IMR-90 (cell line): ENCODE measurements at regions of chr1 and their contacts with region 1.

Region 1: GRCh38 chr1:232635778-232636356 is 5.9 kb upstream of the SIPA1L2 start:
- DNase-seq: peak; percentile 70
- ATAC-seq: peak; percentile 89
- H3K4me3 ChIP-seq: no peak overlapping the region
- H3K27ac ChIP-seq: no peak overlapping the region
- H3K4me1 ChIP-seq: no peaks in the 10 kb centered on the region
- H3K27me3 ChIP-seq: peaks cover 12% of the 10 kb centered on the region
- CTCF ChIP-seq: peak; percentile 83
- POLR2A ChIP-seq: no peak
- RAD21 ChIP-seq: peak; percentile 76

Region 2: DNA sequence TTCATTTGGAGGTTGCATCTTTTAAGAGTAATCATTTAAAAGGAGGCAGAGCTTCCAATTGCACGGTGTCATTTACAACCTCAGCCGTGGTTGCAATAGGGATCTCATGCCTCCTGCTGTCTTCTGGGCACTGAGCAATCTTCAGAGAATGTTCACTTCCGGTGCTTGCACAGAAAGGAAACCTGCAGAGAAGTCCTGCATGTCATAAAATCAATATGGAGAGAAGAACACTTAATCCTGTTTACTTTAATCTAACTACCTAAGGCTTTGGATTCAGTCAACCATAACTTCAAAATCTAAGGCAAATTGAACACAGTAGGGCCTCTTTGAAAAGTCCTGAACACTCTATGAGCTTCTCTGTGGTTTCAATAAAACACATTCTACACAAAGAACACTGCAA is 158.1 kb after region 1 on chr1:
- CTCF ChIA-PET with region 1: no interaction called
- POLR2A ChIA-PET with region 1: no interaction called
- dilution Hi-C with region 1: no loop called
- in situ Hi-C with region 1: no loop called
- intact Hi-C with region 1: loop called (anchors 5 kb)
- DNase-seq: peak; percentile 74
- ATAC-seq: peak; percentile 85
- H3K4me3 ChIP-seq: no peak overlapping the region
- H3K27ac ChIP-seq: no peak overlapping the region
- H3K4me1 ChIP-seq: peaks cover 4% of the 10 kb centered on the region
- H3K27me3 ChIP-seq: no peaks in the 10 kb centered on the region
- CTCF ChIP-seq: peak; percentile 27; the same call in 1 of the 2 replicates
- POLR2A ChIP-seq: no peak
- RAD21 ChIP-seq: 0 out of 2 replicates have a peak, but pooled peaks have one; percentile 20

Region 3: GRCh38 chr1:232950197-232951176 is 314.6 kb after region 1 on chr1 and contains the start of gene NTPCR:
- CTCF ChIA-PET with region 1: no interaction called
- POLR2A ChIA-PET with region 1: no interaction called
- dilution Hi-C with region 1: no loop called
- in situ Hi-C with region 1: loop called (anchors 10 kb)
- intact Hi-C with region 1: loop called (anchors 2 kb)
- DNase-seq: peak; percentile 90
- ATAC-seq: peak; percentile 94
- H3K4me3 ChIP-seq: peak within 1 kb of the TSS; percentile 76
- H3K27ac ChIP-seq: peak within 1 kb of the TSS; percentile 98
- H3K4me1 ChIP-seq: peaks cover 10% of the 10 kb centered on the region
- H3K27me3 ChIP-seq: no peaks in the 10 kb centered on the region
- CTCF ChIP-seq: no peak
- POLR2A ChIP-seq: peak; percentile 28; the same call in 1 of the 2 replicates
- RAD21 ChIP-seq: no peak
- total RNA-seq, gene NTPCR: 13.3 and 16.4 TPM in 2 replicates

Region 4: GRCh38 chr1:232978815-232979214 is 342.9 kb after region 1 on chr1:
- CTCF ChIA-PET with region 1: no interaction called
- POLR2A ChIA-PET with region 1: no interaction called
- dilution Hi-C with region 1: no loop called
- in situ Hi-C with region 1: no loop called
- intact Hi-C with region 1: loop called (anchors 1 kb)
- DNase-seq: no peak
- ATAC-seq: no peak; the same call in 1 of the 2 replicates
- H3K4me3 ChIP-seq: no peak overlapping the region
- H3K27ac ChIP-seq: peak overlapping the region; percentile 94; the same call in 1 of the 2 replicates
- H3K4me1 ChIP-seq: peaks cover 20% of the 10 kb centered on the region
- H3K27me3 ChIP-seq: no peaks in the 10 kb centered on the region
- CTCF ChIP-seq: no peak
- POLR2A ChIP-seq: no peak
- RAD21 ChIP-seq: no peak

Region 5: GRCh38 chr1:233240829-233241682 is 605.2 kb after region 1 on chr1:
- CTCF ChIA-PET with region 1: no interaction called
- POLR2A ChIA-PET with region 1: no interaction called
- dilution Hi-C with region 1: no loop called
- in situ Hi-C with region 1: loop called (anchors 5 kb)
- intact Hi-C with region 1: loop called (anchors 1 kb)
- DNase-seq: peak; percentile 42
- ATAC-seq: peak; percentile 71
- H3K4me3 ChIP-seq: no peak overlapping the region
- H3K27ac ChIP-seq: no peak overlapping the region
- H3K4me1 ChIP-seq: peaks cover 4% of the 10 kb centered on the region; the same call in 1 of the 2 replicates
- H3K27me3 ChIP-seq: no peaks in the 10 kb centered on the region
- CTCF ChIP-seq: peak; percentile 76
- POLR2A ChIP-seq: no peak
- RAD21 ChIP-seq: peak; percentile 92

Region 6: DNA sequence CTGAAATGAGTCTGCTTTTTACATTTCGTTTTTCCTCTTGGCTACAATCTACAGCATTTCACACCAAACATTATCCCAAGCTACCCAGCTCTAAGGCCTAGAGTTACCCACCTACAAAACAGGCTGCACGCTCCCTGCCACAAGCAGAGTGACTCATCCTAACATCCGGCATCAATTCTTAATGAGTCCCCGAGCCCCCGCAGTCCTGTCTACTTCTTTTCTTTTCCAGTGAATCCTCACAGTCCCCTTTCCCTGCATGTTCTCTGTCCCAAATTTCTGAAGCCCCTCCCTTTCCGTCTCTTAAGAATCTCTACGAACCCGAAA is 659.0 kb after region 1 on chr1:
- CTCF ChIA-PET with region 1: no interaction called
- POLR2A ChIA-PET with region 1: no interaction called
- dilution Hi-C with region 1: no loop called
- in situ Hi-C with region 1: no loop called
- intact Hi-C with region 1: loop called (anchors 5 kb)
- DNase-seq: peak; percentile 74
- ATAC-seq: peak; percentile 63
- H3K4me3 ChIP-seq: peak overlapping the region; percentile 79
- H3K27ac ChIP-seq: peak overlapping the region; percentile 79
- H3K4me1 ChIP-seq: peaks cover 6% of the 10 kb centered on the region
- H3K27me3 ChIP-seq: no peaks in the 10 kb centered on the region
- CTCF ChIP-seq: no peak
- POLR2A ChIP-seq: no peak
- RAD21 ChIP-seq: no peak